CD4-positive, alpha-beta T cell (primary cell): ENCODE measurements at regions of chr11 and their contacts with region 1.

Region 1: GRCh38 chr11:74570266-74571061 is 21.9 kb upstream of the POLD3 start:
- DNase-seq: peak in 5 of 14 experiments; percentile 10 to 57 (median 34)
- ATAC-seq: no peak
- H3K4me3 ChIP-seq: no peak overlapping the region
- H3K4me3 Mint-ChIP-seq: no peak overlapping the region
- H3K27ac ChIP-seq: no peak overlapping the region
- H3K27ac Mint-ChIP-seq: no peak overlapping the region
- H3K4me1 ChIP-seq: no peaks in the 10 kb centered on the region
- H3K4me1 Mint-ChIP-seq: no peaks in the 10 kb centered on the region
- H3K27me3 ChIP-seq: no peaks in the 10 kb centered on the region
- H3K27me3 Mint-ChIP-seq: peaks cover 8% of the 10 kb centered on the region
- CTCF ChIP-seq: peak; percentile 44

Region 2: DNA sequence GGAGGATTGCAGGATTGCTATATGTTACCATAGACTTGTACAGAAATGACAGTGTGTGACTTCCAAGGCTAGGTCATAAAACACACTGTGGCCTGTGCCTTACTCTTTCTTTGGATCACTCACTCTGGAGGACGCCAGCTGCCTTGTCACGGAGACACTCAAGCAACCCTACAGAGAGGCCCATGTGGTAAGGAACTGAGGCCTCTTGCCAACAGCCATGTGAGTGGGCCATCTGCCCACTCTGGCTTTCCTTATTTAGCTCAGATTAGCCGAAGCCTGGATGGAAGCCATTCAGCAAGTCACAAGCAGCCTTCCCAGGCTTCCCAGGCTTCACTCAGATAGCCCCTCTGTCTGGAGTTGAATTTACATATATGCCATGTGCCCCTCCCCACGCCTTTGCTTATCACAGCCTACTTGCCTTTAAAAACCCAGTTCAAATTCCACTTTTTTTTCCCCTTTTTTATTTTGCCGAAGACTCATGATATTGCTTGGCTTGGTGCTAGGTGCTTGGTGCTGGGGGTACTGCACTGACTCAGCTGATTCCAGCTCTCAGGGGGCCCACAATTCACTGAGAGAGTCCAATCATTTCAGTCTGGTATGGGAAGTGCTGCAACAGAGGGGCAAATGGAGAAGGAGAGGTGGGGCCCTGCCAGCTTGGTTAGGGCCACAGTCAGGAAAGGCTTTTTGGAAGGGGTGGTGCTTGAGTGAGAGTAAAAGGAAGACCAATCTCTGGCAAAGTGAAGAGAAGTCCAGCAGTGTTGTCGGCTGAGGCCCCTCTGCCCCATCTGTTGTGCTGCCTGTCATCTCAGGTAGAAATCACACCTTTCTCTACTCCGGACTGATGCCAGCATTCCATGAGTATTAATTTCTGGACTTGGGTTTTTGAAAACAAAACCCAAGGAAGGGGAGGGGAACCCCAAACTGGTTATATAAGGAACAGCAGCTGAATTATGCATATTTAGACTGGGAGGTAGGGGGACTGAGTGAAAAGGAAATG is 244.5 kb before region 1 on chr11:
- CTCF ChIA-PET with region 1: no interaction called
- POLR2A ChIA-PET with region 1: no interaction called
- intact Hi-C with region 1: no loop called
- DNase-seq: no peak
- ATAC-seq: no peak
- H3K4me3 ChIP-seq: no peak overlapping the region
- H3K4me3 Mint-ChIP-seq: no peak overlapping the region
- H3K27ac ChIP-seq: no peak overlapping the region
- H3K27ac Mint-ChIP-seq: no peak overlapping the region
- H3K4me1 ChIP-seq: no peaks in the 10 kb centered on the region
- H3K4me1 Mint-ChIP-seq: no peaks in the 10 kb centered on the region
- H3K27me3 ChIP-seq: peaks cover 0 to 4% of the 10 kb centered on the region in 2 experiments
- H3K27me3 Mint-ChIP-seq: peaks cover 4% of the 10 kb centered on the region
- CTCF ChIP-seq: no peak

Region 3: GRCh38 chr11:74388678-74389327 is 181.7 kb before region 1 on chr11:
- CTCF ChIA-PET with region 1: no interaction called
- POLR2A ChIA-PET with region 1: no interaction called
- intact Hi-C with region 1: loop called in 1 of 2 experiments (anchors 5 kb)
- DNase-seq: peak; percentile 14 to 84 (median 62)
- ATAC-seq: peak; percentile 91
- H3K4me3 ChIP-seq: no peak overlapping the region
- H3K4me3 Mint-ChIP-seq: peak overlapping the region; percentile 35
- H3K27ac ChIP-seq: no peak overlapping the region
- H3K27ac Mint-ChIP-seq: peak overlapping the region; percentile 40
- H3K4me1 ChIP-seq: peaks cover 4% of the 10 kb centered on the region
- H3K4me1 Mint-ChIP-seq: peaks cover 38% of the 10 kb centered on the region
- H3K27me3 ChIP-seq: no peaks in the 10 kb centered on the region
- H3K27me3 Mint-ChIP-seq: no peaks in the 10 kb centered on the region
- CTCF ChIP-seq: peak; percentile 88

Region 4: DNA sequence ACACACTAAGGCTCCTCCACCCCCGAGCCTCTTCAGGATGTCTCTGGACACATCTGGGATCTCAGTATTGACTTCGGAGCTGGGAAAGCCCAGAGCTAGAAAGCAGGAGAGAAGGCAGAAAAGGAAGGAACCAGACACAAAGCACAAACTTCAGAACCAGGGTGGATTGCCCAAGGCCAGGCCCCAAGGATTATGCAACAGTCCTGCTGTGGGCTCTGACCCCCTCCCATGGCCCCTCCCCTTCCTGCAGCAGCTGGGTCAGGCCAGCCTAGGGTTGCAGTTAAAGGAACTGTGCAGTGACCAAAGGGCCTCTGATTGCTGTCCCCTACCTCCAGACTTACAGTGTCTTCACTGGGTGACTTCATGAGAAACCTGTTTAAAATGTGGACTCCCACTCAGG is 108.5 kb before region 1 on chr11:
- CTCF ChIA-PET with region 1: no interaction called
- POLR2A ChIA-PET with region 1: no interaction called
- intact Hi-C with region 1: loop called in 1 of 2 experiments (anchors 1 kb)
- DNase-seq: peak in 3 of 14 experiments; percentile 21 to 62 (median 53)
- ATAC-seq: no peak
- H3K4me3 ChIP-seq: peak overlapping the region; percentile 29
- H3K4me3 Mint-ChIP-seq: no peak overlapping the region
- H3K27ac ChIP-seq: no peak overlapping the region
- H3K27ac Mint-ChIP-seq: no peak overlapping the region
- H3K4me1 ChIP-seq: peaks cover 2% of the 10 kb centered on the region
- H3K4me1 Mint-ChIP-seq: no peaks in the 10 kb centered on the region
- H3K27me3 ChIP-seq: peaks cover 10 to 17% of the 10 kb centered on the region in 2 experiments
- H3K27me3 Mint-ChIP-seq: peaks cover 23% of the 10 kb centered on the region
- CTCF ChIP-seq: no peak

Region 5: DNA sequence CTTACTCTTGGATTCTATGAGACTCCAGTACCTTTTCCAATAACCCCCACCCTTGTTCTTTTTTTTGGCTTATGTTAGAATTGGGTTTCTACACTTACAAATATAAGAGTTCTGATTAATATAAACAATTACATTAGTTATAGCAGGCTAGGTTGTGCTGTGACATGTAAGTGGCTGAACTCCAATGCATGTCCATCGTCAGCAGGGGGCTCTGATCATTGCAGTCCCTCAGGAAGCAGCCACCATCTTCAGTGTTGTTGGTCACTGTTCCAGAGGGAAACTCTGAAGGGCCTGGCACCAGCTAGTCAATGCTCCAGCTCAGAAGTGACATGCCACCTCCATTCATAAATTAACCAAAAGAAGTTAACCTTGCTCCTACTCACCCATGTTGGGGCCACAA is 82.6 kb before region 1 on chr11:
- CTCF ChIA-PET with region 1: no interaction called
- POLR2A ChIA-PET with region 1: no interaction called
- intact Hi-C with region 1: no loop called
- DNase-seq: no peak
- ATAC-seq: no peak
- H3K4me3 ChIP-seq: no peak overlapping the region
- H3K4me3 Mint-ChIP-seq: no peak overlapping the region
- H3K27ac ChIP-seq: no peak overlapping the region
- H3K27ac Mint-ChIP-seq: no peak overlapping the region
- H3K4me1 ChIP-seq: peaks cover 3% of the 10 kb centered on the region
- H3K4me1 Mint-ChIP-seq: peaks cover 12% of the 10 kb centered on the region
- H3K27me3 ChIP-seq: no peaks in the 10 kb centered on the region
- H3K27me3 Mint-ChIP-seq: no peaks in the 10 kb centered on the region
- CTCF ChIP-seq: no peak